ENCODE measurements at regions of chr1 and their contacts with region 1.

Region 1: GRCh38 chr1:15046487-15047165 is 106.9 kb upstream of the TMEM51 start:
- DNase-seq: peak; percentile 81
- ATAC-seq: peak; percentile 89
- H3K4me3 ChIP-seq: no peak overlapping the region
- H3K27ac ChIP-seq: no peak overlapping the region
- H3K4me1 ChIP-seq: peaks cover 4% of the 10 kb centered on the region
- H3K27me3 ChIP-seq: no peaks in the 10 kb centered on the region
- CTCF ChIP-seq: peak; percentile 93

Region 2: GRCh38 chr1:14782741-14783591 is 263.7 kb before region 1 on chr1:
- intact Hi-C with region 1: loop called (anchors 10 kb)
- DNase-seq: no peak
- ATAC-seq: no peak
- H3K4me3 ChIP-seq: no peak overlapping the region
- H3K27ac ChIP-seq: no peak overlapping the region
- H3K4me1 ChIP-seq: no peaks in the 10 kb centered on the region
- H3K27me3 ChIP-seq: no peaks in the 10 kb centered on the region
- CTCF ChIP-seq: no peak

Region 3: DNA sequence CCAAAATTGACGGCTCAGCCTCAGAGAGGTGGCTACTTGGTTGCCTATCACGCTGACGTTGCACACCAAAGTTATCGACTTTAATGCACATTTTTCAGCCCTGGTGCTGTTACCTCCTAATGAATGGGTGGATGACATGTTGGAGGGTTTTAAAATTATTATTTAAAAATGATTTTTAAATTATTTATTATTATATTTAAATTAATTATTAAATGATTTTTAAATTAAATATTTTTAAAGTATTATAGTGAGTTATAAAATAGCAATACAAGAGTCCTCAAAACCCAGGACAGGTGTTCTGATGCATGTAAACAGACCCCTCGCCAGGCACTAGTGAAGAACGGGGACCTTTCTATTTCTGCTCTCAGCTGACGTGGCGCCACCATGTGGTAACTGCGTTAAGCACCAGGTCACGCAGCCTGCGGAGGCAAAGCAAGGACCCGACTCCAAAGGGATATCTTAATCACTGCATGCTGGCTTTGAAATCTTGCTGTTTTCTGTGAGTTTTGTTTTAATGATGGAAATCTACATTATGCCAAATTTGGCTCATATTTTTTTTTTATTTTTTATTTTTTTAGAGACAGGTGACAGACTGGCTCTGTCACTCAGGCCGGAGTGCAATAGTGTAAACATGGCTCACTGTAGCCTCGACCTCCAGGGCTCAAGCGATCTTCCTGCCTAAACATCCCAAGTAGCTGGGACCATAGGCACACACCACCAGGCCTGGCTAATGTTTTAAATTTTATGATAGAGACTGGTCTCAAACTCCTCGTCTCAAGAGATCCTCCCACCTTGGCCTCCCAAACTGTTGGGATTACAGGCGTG is 454.8 kb after region 1 on chr1:
- intact Hi-C with region 1: no loop called
- DNase-seq: peak; percentile 73
- ATAC-seq: peak; percentile 84
- H3K4me3 ChIP-seq: no peak overlapping the region
- H3K27ac ChIP-seq: no peak overlapping the region
- H3K4me1 ChIP-seq: no peaks in the 10 kb centered on the region
- H3K27me3 ChIP-seq: no peaks in the 10 kb centered on the region
- CTCF ChIP-seq: peak; percentile 67

Measured in upper lobe of right lung (tissue), 1 donor.